ENCODE measurements at regions of chr10 and their contacts with region 1.

Region 1: DNA sequence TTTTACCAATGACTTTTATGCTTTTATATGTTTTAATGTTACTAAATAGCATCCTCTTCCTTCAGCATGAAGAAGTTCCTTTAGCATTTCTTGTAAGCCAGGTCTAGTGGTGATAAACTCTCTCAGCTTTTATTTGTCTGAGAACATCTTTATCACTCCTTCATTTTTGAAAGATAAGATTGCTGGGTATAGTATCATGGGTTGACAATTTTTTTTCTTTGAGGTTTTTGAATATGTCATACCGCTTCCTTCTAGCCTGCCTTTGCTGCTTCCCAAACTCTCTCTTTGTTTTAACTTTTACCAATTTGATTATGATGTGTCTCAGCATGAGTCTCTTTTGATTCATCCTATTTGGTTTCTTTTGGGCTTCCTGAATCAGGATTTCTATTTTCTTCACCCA is 108.2 kb upstream of the KAT6B start:
- DNase-seq: no peak
- ATAC-seq: no peak
- H3K4me3 ChIP-seq: no peak overlapping the region
- H3K4me3 Mint-ChIP-seq: no peak overlapping the region
- H3K27ac ChIP-seq: no peak overlapping the region
- H3K27ac Mint-ChIP-seq: peak overlapping the region; percentile 32
- H3K4me1 ChIP-seq: no peaks in the 10 kb centered on the region
- H3K4me1 Mint-ChIP-seq: no peaks in the 10 kb centered on the region
- H3K27me3 ChIP-seq: no peaks in the 10 kb centered on the region
- H3K27me3 Mint-ChIP-seq: no peaks in the 10 kb centered on the region
- CTCF ChIP-seq: no peak

Region 2: GRCh38 chr10:74640134-74640931 is 77.9 kb before region 1 on chr10:
- CTCF ChIA-PET with region 1: no interaction called
- POLR2A ChIA-PET with region 1: no interaction called
- intact Hi-C with region 1: loop called in 1 of 2 experiments (anchors 10 kb)
- DNase-seq: no peak
- ATAC-seq: no peak
- H3K4me3 ChIP-seq: no peak overlapping the region
- H3K4me3 Mint-ChIP-seq: no peak overlapping the region
- H3K27ac ChIP-seq: no peak overlapping the region
- H3K27ac Mint-ChIP-seq: no peak overlapping the region
- H3K4me1 ChIP-seq: no peaks in the 10 kb centered on the region
- H3K4me1 Mint-ChIP-seq: no peaks in the 10 kb centered on the region
- H3K27me3 ChIP-seq: no peaks in the 10 kb centered on the region
- H3K27me3 Mint-ChIP-seq: no peaks in the 10 kb centered on the region
- CTCF ChIP-seq: no peak

Measured in CD8-positive, alpha-beta T cell (primary cell).